BJ (cell line): ENCODE measurements at regions of chr1 and their contacts with region 1.

Region 1: GRCh38 chr1:15994590-15995351 is 9.3 kb upstream of the SRARP start:
- DNase-seq: no peak
- H3K4me3 ChIP-seq: no peak overlapping the region
- H3K27me3 ChIP-seq: peaks cover 3% of the 10 kb centered on the region
- CTCF ChIP-seq: peak; percentile 99

Region 2: DNA sequence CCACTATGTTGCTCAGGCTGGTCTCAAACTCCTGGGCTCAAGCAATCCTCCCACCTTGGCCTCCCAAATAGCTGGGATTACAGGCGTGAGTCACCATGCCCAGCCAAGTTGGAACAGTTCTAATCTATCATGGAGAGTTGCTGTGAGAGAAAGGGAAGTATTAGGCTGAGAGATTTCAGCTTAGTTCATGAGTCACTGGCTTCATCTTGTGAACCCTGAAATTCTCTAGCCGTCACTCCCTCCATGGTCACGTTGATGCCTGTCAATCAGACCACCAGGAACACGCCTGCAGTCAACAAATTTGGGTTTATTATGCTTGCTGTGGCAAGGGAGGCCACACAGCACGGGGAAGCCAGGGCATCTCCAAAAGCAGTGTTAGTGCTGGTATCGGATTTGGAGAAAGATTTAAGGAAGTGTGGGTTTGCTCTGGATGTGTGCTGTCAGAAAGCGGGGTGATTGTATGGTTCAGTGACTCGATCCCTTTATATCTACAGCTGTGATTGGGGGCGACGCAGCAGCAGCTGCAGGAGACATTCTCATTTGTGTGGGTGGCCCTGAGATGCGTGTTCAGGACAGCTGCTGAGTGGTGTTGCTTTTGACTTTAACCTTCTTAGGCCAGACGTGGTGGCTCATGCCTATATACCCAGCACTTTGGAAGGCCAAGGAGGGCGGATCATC is 206.0 kb before region 1 on chr1:
- CTCF ChIA-PET with region 1: interaction called, 54 read pairs
- POLR2A ChIA-PET with region 1: no interaction called
- DNase-seq: no peak
- H3K4me3 ChIP-seq: no peak overlapping the region
- H3K27me3 ChIP-seq: no peaks in the 10 kb centered on the region
- CTCF ChIP-seq: no peak

Region 3: DNA sequence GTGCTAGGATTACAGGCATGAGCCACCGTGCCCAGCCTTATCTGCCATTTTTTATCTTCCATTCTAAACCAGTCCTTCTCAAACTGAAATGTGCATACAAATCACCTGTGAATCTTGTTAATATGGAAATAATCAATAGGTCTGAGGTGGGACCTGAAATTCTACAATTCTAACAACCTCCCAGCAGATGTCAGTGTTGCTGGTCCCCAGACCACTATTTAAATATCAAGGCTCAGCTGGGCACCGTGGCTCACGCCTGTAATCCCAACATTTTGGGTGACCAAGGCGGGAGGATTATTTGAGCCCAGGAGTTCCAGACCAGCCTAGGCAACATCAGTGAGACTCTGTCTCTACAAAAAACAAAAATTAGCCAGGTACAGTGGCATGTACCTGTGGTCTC is 191.4 kb before region 1 on chr1:
- CTCF ChIA-PET with region 1: interaction called, 26 read pairs
- POLR2A ChIA-PET with region 1: no interaction called
- DNase-seq: no peak
- H3K4me3 ChIP-seq: no peak overlapping the region
- H3K27me3 ChIP-seq: no peaks in the 10 kb centered on the region
- CTCF ChIP-seq: peak; percentile 33

Region 4: DNA sequence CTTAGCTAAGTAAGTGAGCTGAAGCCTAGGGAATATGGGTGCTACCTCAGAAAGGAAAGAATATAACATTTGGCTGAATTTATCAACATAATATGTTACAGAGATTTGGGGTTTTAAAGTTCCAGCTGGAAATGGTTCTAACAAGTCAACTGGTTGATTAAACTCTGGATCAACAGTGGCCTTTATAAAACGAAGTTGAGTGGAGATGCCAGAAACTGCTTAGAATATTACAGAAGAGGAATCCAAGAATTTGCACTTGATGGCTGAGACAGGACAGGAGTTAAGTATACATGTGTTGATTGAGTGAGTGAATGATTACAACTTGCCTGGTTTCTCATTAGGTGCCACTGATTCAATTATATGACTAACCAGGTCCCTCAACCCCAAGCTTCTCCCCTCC is 11.5 kb before region 1 on chr1:
- CTCF ChIA-PET with region 1: interaction called, 10 read pairs
- POLR2A ChIA-PET with region 1: no interaction called
- DNase-seq: no peak
- H3K4me3 ChIP-seq: no peak overlapping the region
- H3K27me3 ChIP-seq: no peaks in the 10 kb centered on the region
- CTCF ChIP-seq: no peak

Region 5: GRCh38 chr1:16677552-16678431 is 683.0 kb after region 1 on chr1:
- CTCF ChIA-PET with region 1: no interaction called
- POLR2A ChIA-PET with region 1: no interaction called
- DNase-seq: no peak
- H3K4me3 ChIP-seq: no peak overlapping the region
- H3K27me3 ChIP-seq: peaks cover 5% of the 10 kb centered on the region; the same call in 1 of the 2 replicates
- CTCF ChIP-seq: no peak